Panc1 (cell line): ENCODE measurements at regions of chr10 and their contacts with region 1.

Region 1: GRCh38 chr10:784403-785088 is 95.1 kb upstream of the DIP2C start:
- DNase-seq: no peak
- ATAC-seq: peak; percentile 79
- H3K4me3 ChIP-seq: peak overlapping the region; percentile 31 to 43
- H3K27ac ChIP-seq: no peak overlapping the region
- H3K4me1 ChIP-seq: no peaks in the 10 kb centered on the region; the same call in 1 of the 2 replicates
- H3K27me3 ChIP-seq: no peaks in the 10 kb centered on the region
- CTCF ChIP-seq: no peak; the same call in 1 of the 2 replicates

Region 2: DNA sequence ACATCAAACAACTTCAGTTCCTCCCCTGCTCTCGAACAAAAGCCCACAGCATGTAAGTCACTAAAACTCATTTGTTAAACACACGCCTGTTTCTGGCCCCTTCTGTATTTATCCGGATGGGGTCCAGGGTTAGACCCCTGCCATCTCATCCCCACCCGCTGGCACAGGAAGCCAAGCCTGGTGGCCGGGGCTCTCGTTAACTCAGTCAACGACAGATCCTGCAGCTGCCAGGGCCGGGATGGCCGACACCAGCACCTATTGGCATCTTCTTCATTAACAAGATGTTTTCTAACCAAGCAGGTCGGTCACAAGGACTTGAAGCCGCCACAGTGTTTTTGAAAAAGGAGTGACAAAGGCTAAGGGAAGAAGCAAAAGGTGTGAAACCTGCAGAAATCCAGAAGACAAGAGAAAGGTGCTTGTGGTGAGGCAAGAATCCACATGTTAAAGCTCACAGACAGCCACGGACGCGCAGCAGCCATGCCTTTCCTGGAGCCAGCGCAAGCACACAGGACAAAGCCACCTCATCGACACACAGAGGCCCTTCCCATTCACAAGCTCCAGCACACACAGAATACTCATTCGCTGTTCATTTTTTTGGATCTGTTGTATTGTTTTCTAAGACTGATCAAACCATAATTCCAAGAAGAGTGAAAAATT is 297.8 kb before region 1 on chr10:
- CTCF ChIA-PET with region 1: interaction called, 11 read pairs
- POLR2A ChIA-PET with region 1: no interaction called
- in situ Hi-C with region 1: no loop called
- intact Hi-C with region 1: no loop called
- DNase-seq: no peak
- ATAC-seq: no peak
- H3K4me3 ChIP-seq: no peak overlapping the region
- H3K27ac ChIP-seq: no peak overlapping the region
- H3K4me1 ChIP-seq: no peaks in the 10 kb centered on the region
- H3K27me3 ChIP-seq: no peaks in the 10 kb centered on the region
- CTCF ChIP-seq: no peak

Region 3: DNA sequence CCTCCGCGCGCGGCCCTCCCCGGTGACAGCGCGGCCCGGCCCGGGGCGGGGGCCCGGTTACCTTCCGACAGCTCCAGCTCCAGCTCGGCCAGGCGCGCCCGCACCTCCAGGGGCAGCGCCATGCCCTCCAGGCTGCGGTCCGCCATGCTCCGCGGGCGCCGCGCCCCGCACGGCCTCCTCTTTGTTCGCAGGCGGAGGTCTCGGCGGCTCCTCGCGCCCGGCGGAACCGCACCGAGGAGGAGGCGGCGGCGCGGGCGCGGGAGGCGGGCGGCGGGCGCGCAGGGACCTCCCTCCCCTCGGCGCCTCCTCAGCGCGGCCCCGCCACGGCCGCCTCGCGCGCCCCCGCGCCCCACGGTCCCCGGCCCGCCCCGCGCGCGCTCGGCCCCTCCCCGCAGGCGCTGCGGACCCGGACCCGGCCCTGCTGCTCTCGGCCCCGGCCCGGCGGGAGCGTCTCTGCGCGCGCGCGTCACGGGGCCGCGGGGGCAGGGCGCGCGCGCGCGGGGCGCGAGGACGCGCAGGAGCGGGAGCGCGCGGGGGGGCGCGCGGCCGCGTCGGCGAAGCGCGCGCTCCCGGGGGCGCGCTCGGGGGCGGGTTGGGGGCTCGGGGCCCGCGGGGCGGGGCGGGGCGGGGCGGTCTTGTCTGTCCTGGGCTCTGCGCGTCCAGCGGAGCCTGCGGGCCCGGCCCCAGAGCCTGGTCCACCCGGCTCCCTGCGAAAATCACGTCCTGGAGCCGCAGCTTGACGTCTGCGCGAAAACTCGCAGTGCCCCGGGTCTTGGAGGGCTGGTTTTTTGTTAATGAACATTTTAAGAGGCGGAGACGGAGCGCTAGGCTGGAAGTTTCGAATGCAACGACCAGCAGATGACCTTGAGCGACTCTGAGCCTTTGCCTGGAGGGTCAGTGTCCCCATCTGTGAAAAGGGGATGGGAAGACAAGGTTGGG is 94.8 kb before region 1 on chr10 and contains the start of gene DIP2C:
- CTCF ChIA-PET with region 1: interaction called, 3 read pairs
- POLR2A ChIA-PET with region 1: no interaction called
- in situ Hi-C with region 1: no loop called
- intact Hi-C with region 1: loop called (anchors 10 kb)
- DNase-seq: no peak
- ATAC-seq: peak; percentile 91
- H3K4me3 ChIP-seq: peak within 1 kb of the TSS; percentile 66 to 71
- H3K27ac ChIP-seq: peak within 1 kb of the TSS; percentile 73
- H3K4me1 ChIP-seq: peaks cover 13% of the 10 kb centered on the region
- H3K27me3 ChIP-seq: no peaks in the 10 kb centered on the region
- CTCF ChIP-seq: no peak
- total RNA-seq, gene DIP2C: 13.2 TPM

Region 4: GRCh38 chr10:767211-767610 is 17.3 kb before region 1 on chr10:
- CTCF ChIA-PET with region 1: no interaction called
- POLR2A ChIA-PET with region 1: no interaction called
- in situ Hi-C with region 1: no loop called
- intact Hi-C with region 1: no loop called
- DNase-seq: no peak
- ATAC-seq: no peak
- H3K4me3 ChIP-seq: no peak overlapping the region
- H3K27ac ChIP-seq: no peak overlapping the region
- H3K4me1 ChIP-seq: no peaks in the 10 kb centered on the region
- H3K27me3 ChIP-seq: no peaks in the 10 kb centered on the region
- CTCF ChIP-seq: no peak